ENCODE measurements at regions of chr2 and their contacts with region 1.

Region 1: GRCh38 chr2:12141618-12142258 is 395.3 kb downstream of the LPIN1 start:
- DNase-seq: no peak
- ATAC-seq: no peak
- H3K4me3 ChIP-seq: no peak overlapping the region
- H3K27ac ChIP-seq: no peak overlapping the region
- H3K4me1 ChIP-seq: no peaks in the 10 kb centered on the region
- H3K27me3 ChIP-seq: no peaks in the 10 kb centered on the region
- CTCF ChIP-seq: no peak

Region 2: DNA sequence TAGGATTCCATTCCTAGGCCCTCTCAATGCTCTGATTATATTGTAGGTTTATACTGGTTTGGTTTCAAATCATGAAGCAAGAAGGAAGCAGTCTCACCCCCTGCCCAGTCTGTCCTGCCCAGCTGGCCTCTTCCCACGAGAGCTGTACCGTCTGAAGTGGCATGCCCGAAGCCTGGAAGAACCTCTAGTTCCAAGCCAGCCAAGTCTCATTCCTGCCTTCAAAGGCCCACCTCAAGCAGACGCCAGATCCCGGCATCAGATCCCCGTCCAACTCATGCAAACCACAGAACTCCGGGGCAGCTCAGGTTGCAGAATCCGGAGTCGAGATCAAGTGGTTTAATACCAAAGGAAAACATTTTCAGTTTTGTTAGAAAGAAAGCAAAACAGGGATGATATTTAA is 160.9 kb before region 1 on chr2:
- intact Hi-C with region 1: loop called in 1 of 10 experiments (anchors 10 kb)
- DNase-seq: no peak
- ATAC-seq: no peak
- H3K4me3 ChIP-seq: no peak overlapping the region
- H3K27ac ChIP-seq: no peak overlapping the region
- H3K4me1 ChIP-seq: no peaks in the 10 kb centered on the region
- H3K27me3 ChIP-seq: no peaks in the 10 kb centered on the region
- CTCF ChIP-seq: no peak